Caco-2 (cell line): ENCODE measurements at regions of chr15 and their contacts with region 1.

Region 1: GRCh38 chr15:64197425-64197824 is 34.6 kb upstream of the PPIB start:
- DNase-seq: no peak
- H3K4me3 ChIP-seq: no peak overlapping the region
- H3K4me3 Mint-ChIP-seq: no peak overlapping the region
- H3K27ac Mint-ChIP-seq: no peak overlapping the region
- H3K4me1 ChIP-seq: no peaks in the 10 kb centered on the region
- H3K4me1 Mint-ChIP-seq: no peaks in the 10 kb centered on the region
- H3K27me3 ChIP-seq: no peaks in the 10 kb centered on the region
- H3K27me3 Mint-ChIP-seq: no peaks in the 10 kb centered on the region
- CTCF ChIP-seq: no peak

Region 2: GRCh38 chr15:64162870-64163658 is 34.4 kb before region 1 on chr15 and contains the start of gene PPIB:
- CTCF ChIA-PET with region 1: interaction called, 18 read pairs
- POLR2A ChIA-PET with region 1: no interaction called
- intact Hi-C with region 1: loop called (anchors 1 kb)
- DNase-seq: peak; percentile 97 to 98
- H3K4me3 ChIP-seq: peak within 1 kb of the TSS; percentile 74
- H3K4me3 Mint-ChIP-seq: peak within 1 kb of the TSS; percentile 77
- H3K27ac Mint-ChIP-seq: peak within 1 kb of the TSS; percentile 89
- H3K4me1 ChIP-seq: peaks cover 4% of the 10 kb centered on the region; the same call in 1 of the 2 replicates
- H3K4me1 Mint-ChIP-seq: no peaks in the 10 kb centered on the region
- H3K27me3 ChIP-seq: no peaks in the 10 kb centered on the region
- H3K27me3 Mint-ChIP-seq: no peaks in the 10 kb centered on the region
- CTCF ChIP-seq: peak; percentile 11 to 61
- total RNA-seq, gene PPIB: 458 and 504 TPM in 2 replicates

Region 3: DNA sequence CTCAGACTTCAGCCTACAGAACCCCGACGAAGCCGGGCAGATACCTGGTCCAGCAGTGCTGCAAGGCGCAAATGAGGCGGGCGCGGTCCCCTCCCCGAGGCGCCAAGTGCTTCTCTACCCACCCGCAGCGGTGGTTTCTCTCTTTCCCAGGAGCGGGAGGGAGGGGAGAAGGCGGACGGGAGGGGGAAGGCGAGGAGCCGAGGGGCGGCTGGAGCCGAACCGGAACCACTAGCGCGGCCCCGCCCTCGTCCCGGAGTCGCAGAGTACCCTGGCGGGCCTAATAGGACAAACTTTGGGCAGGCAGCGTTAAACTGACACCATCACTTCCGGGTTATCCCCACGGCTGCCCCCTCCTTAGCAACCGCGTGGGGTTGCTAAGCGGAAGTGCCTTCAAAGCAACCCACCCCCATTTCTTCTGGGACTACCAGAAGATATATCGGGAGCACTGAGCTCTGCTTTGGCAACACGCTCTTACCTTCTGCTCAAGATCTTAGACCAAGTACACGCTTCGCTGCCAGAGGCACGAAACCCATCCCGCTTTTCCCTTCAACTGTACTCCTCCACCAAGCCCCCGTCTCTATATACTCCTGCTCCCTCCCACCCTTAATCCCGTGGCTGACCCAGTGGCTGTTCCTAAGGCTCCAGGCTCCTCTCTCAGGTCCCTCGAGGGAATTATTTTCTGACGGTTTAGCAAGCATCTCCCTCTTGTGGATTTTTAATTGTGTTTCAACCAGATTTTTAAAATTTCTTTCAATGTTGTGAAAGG is 158.7 kb after region 1 on chr15 and contains the start of gene CSNK1G1:
- CTCF ChIA-PET with region 1: interaction called, 4 read pairs
- POLR2A ChIA-PET with region 1: no interaction called
- intact Hi-C with region 1: loop called (anchors 1 kb)
- DNase-seq: peak; percentile 95 to 96
- H3K4me3 ChIP-seq: peak within 1 kb of the TSS; percentile 92
- H3K4me3 Mint-ChIP-seq: peak within 1 kb of the TSS; percentile 82
- H3K27ac Mint-ChIP-seq: peak within 1 kb of the TSS; percentile 87
- H3K4me1 ChIP-seq: 0 out of 2 replicates have a peak, but pooled peaks cover 5% of the 10 kb centered on the region
- H3K4me1 Mint-ChIP-seq: peaks cover 16% of the 10 kb centered on the region
- H3K27me3 ChIP-seq: no peaks in the 10 kb centered on the region
- H3K27me3 Mint-ChIP-seq: no peaks in the 10 kb centered on the region
- CTCF ChIP-seq: peak in 1 of 2 experiments; percentile 28
- total RNA-seq, gene CSNK1G1: 11.5 and 17.5 TPM in 2 replicates

Region 4: DNA sequence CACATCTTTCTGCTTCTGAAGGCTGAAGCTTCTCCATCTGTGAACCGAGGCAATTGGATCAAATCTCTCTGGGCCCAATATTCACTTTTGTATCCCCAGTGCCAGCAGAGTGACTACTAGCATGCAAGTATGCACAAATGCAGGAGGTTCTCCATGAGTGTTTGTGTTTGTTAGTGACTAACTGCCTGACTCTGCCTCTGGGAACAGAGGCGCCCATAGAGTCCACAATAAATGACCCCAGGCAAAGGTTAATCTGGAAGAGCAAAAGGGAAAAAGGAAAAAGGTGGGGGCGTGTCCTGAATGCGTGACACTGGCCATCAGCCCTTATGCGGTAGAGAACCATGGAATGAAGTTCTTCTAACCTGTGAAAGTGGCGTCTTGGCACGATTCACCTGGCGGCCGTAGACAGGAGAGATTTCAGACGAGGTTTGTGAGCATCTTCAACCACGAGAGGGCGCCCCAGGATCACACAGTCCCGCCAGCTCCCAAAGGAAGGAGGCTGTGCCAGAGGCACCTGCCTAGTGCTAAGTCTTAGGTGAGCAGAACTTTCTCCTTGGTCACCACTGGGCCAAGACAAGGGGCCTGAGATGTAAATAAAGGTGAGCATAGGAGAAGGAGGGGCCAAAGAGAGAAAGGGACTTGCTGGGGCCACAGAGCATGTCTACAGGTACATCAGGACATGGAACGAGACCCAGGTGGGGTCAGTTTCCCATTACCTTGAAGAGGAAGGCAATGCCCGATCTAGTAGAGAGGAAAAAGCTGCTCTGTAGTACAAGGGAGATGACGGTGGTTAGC is 533.8 kb after region 1 on chr15:
- CTCF ChIA-PET with region 1: no interaction called
- POLR2A ChIA-PET with region 1: no interaction called
- intact Hi-C with region 1: no loop called
- DNase-seq: peak; percentile 84 to 89
- H3K4me3 ChIP-seq: no peak overlapping the region
- H3K4me3 Mint-ChIP-seq: no peak overlapping the region
- H3K27ac Mint-ChIP-seq: no peak overlapping the region
- H3K4me1 ChIP-seq: no peaks in the 10 kb centered on the region
- H3K4me1 Mint-ChIP-seq: no peaks in the 10 kb centered on the region
- H3K27me3 ChIP-seq: no peaks in the 10 kb centered on the region
- H3K27me3 Mint-ChIP-seq: no peaks in the 10 kb centered on the region
- CTCF ChIP-seq: peak; percentile 89